MCF 10A (cell line): ENCODE measurements at regions of chr6 and their contacts with region 1.

Region 1: DNA sequence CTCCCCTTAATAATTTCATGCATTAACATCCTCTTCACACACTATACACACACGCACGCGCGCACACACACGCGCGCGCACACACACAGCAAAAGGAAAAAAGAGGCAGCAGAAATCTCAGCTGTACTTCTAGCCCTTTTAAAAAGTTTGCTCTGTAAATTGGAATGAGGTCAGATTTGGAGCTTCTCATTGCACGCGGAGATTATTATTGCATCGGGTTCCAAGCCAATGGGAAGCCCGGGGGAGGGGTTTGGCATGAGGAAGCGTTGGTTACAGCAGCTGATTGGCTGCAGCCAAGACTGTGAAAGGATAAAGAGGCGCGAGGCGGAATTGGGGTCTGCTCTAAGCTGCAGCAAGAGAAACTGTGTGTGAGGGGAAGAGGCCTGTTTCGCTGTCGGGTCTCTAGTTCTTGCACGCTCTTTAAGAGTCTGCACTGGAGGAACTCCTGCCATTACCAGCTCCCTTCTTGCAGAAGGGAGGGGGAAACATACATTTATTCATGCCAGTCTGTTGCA is at the start of gene SOX4:
- DNase-seq: peak; percentile 97
- H3K4me3 Mint-ChIP-seq: no peak within 1 kb of the TSS
- H3K27ac Mint-ChIP-seq: no peak within 1 kb of the TSS
- H3K4me1 Mint-ChIP-seq: no peaks in the 10 kb centered on the region
- H3K27me3 Mint-ChIP-seq: no peaks in the 10 kb centered on the region
- CTCF ChIP-seq: no peak
- total RNA-seq, gene SOX4: 12.8 and 12.9 TPM in 2 replicates

Region 2: GRCh38 chr6:20877008-20877937 is 716.2 kb before region 1 on chr6:
- CTCF ChIA-PET with region 1: interaction called, 62 read pairs
- POLR2A ChIA-PET with region 1: interaction called, 52 read pairs
- intact Hi-C with region 1: loop called (anchors 1 kb)
- DNase-seq: peak; percentile 89
- H3K4me3 Mint-ChIP-seq: peak overlapping the region; percentile 5
- H3K27ac Mint-ChIP-seq: peak overlapping the region; percentile 78
- H3K4me1 Mint-ChIP-seq: peaks cover 23% of the 10 kb centered on the region
- H3K27me3 Mint-ChIP-seq: no peaks in the 10 kb centered on the region
- CTCF ChIP-seq: no peak

Region 3: GRCh38 chr6:21099338-21100314 is 493.8 kb before region 1 on chr6:
- CTCF ChIA-PET with region 1: no interaction called
- POLR2A ChIA-PET with region 1: no interaction called
- intact Hi-C with region 1: no loop called
- DNase-seq: no peak
- H3K4me3 Mint-ChIP-seq: no peak overlapping the region
- H3K27ac Mint-ChIP-seq: no peak overlapping the region
- H3K4me1 Mint-ChIP-seq: no peaks in the 10 kb centered on the region
- H3K27me3 Mint-ChIP-seq: no peaks in the 10 kb centered on the region
- CTCF ChIP-seq: no peak

Region 4: GRCh38 chr6:21402368-21402767 is 191.1 kb before region 1 on chr6:
- CTCF ChIA-PET with region 1: no interaction called
- POLR2A ChIA-PET with region 1: interaction called, 6 read pairs
- intact Hi-C with region 1: loop called (anchors 5 kb)
- DNase-seq: peak; percentile 68
- H3K4me3 Mint-ChIP-seq: no peak overlapping the region
- H3K27ac Mint-ChIP-seq: peak overlapping the region; percentile 89
- H3K4me1 Mint-ChIP-seq: peaks cover 17% of the 10 kb centered on the region
- H3K27me3 Mint-ChIP-seq: no peaks in the 10 kb centered on the region
- CTCF ChIP-seq: no peak

Region 5: GRCh38 chr6:21873562-21873961 is 280.1 kb after region 1 on chr6:
- CTCF ChIA-PET with region 1: interaction called, 3 read pairs
- POLR2A ChIA-PET with region 1: interaction called, 15 read pairs
- intact Hi-C with region 1: no loop called
- DNase-seq: peak; percentile 97
- H3K4me3 Mint-ChIP-seq: peak overlapping the region; percentile 5
- H3K27ac Mint-ChIP-seq: no peak overlapping the region
- H3K4me1 Mint-ChIP-seq: peaks cover 23% of the 10 kb centered on the region
- H3K27me3 Mint-ChIP-seq: no peaks in the 10 kb centered on the region
- CTCF ChIP-seq: no peak

Region 6: DNA sequence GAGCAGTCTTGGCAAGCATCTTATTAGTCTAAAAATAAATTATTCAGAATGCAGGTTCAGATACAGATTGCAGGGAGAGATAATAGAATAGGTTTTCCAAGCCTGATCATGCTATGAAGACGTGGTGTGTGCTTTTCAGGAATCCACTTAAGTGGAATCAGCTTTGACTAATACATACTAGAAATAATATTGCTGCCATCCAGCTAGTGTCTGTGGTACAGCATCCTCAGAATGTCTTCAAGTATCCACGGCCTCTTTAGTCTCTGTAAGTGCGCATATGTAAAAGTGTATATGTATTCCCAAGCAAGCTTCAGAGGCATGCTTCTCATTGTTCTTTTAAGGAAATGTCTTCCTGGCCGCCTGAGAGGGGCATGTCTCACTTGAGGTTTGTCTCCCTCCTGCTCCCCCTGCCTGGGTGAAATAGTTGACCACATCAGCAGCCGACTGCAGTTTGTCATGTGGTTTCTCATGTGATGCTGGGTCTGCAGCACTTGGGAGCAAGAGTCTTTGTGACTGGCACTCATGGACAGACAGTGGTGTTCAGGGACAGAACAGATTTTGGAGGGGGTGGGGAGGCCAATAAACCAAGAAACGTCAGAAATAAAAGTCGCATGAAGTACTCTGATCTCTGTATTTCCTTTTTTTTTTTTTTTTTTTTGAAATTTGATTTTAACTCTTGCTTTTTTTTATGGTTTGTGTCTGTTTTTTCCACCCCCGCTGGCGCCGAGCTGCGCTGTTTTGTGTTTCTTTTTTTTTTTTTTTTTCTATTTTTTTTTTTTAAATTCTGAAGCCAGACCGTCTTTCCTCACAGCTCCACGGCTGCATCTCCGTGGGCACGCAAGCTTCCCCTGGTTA is 552.6 kb after region 1 on chr6:
- CTCF ChIA-PET with region 1: interaction called, 4 read pairs
- POLR2A ChIA-PET with region 1: no interaction called
- intact Hi-C with region 1: loop called (anchors 10 kb)
- DNase-seq: peak; percentile 1
- H3K4me3 Mint-ChIP-seq: no peak overlapping the region
- H3K27ac Mint-ChIP-seq: no peak overlapping the region
- H3K4me1 Mint-ChIP-seq: peaks cover 11% of the 10 kb centered on the region
- H3K27me3 Mint-ChIP-seq: no peaks in the 10 kb centered on the region
- CTCF ChIP-seq: no peak

Region 7: DNA sequence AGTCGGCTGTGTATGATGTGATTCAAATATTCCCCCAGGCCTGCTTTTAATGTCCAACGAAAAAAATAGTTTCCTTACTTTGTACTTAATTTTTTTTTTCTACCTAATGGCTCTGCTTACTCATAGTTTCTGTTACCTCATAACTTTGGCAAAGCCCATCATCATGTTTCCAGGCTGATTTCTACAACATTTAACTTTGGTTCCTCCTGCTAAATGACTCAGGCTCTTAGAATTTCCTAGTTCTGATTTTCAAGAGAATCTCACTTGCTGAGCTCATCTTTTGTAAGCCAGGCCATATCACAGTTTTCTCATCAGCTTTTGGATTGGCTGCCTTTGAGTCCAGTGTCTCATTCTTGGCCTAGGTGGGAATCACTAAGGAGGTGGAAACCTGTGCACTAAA is 1299.0 kb after region 1 on chr6:
- CTCF ChIA-PET with region 1: interaction called, 4 read pairs
- POLR2A ChIA-PET with region 1: interaction called, 13 read pairs
- intact Hi-C with region 1: no loop called
- DNase-seq: peak; percentile 89
- H3K4me3 Mint-ChIP-seq: no peak overlapping the region
- H3K27ac Mint-ChIP-seq: peak overlapping the region; percentile 78
- H3K4me1 Mint-ChIP-seq: peaks cover 5% of the 10 kb centered on the region
- H3K27me3 Mint-ChIP-seq: no peaks in the 10 kb centered on the region
- CTCF ChIP-seq: no peak